Heart left ventricle (tissue), 16 donors: ENCODE measurements at regions of chr17 and their contacts with region 1.

Region 1: GRCh38 chr17:17526369-17526768 is 30.2 kb upstream of the RASD1 start:
- DNase-seq: peak; percentile 48 to 86 (median 66)
- ATAC-seq: peak; percentile 86 to 92 (median 90)
- H3K4me3 ChIP-seq: no peak overlapping the region
- H3K27ac ChIP-seq: peak overlapping the region in 11 of 12 donors; percentile 30 to 85 (median 73)
- H3K4me1 ChIP-seq: peaks cover 0 to 41% (median 14%) of the 10 kb centered on the region in 12 donors
- H3K27me3 ChIP-seq: no peaks in the 10 kb centered on the region
- CTCF ChIP-seq: no peak
- POLR2A ChIP-seq: no peak

Region 2: GRCh38 chr17:17476865-17477467 is 49.4 kb before region 1 on chr17 and contains the start of gene MED9:
- intact Hi-C with region 1: no loop called
- DNase-seq: peak; percentile 93 to 97 (median 95)
- ATAC-seq: peak; percentile 95 to 99 (median 99)
- H3K4me3 ChIP-seq: peak within 1 kb of the TSS; percentile 63 to 98 (median 84)
- H3K27ac ChIP-seq: peak within 1 kb of the TSS; percentile 90 to 98 (median 94)
- H3K4me1 ChIP-seq: peaks cover 0 to 52% (median 41%) of the 10 kb centered on the region in 12 donors
- H3K27me3 ChIP-seq: no peaks in the 10 kb centered on the region
- CTCF ChIP-seq: no peak
- POLR2A ChIP-seq: peak; percentile 29 to 77
- total RNA-seq, gene MED9: 26.3 to 64.4 (median 33.0) TPM

Region 3: GRCh38 chr17:17506811-17507464 is 19.4 kb before region 1 on chr17:
- intact Hi-C with region 1: loop called in 1 of 10 experiments (anchors 1 kb)
- DNase-seq: peak; percentile 58 to 93 (median 82)
- ATAC-seq: peak; percentile 36 to 88 (median 76)
- H3K4me3 ChIP-seq: no peak overlapping the region
- H3K27ac ChIP-seq: peak overlapping the region; percentile 32 to 88 (median 56)
- H3K4me1 ChIP-seq: peaks cover 0 to 28% (median 10%) of the 10 kb centered on the region in 12 donors
- H3K27me3 ChIP-seq: no peaks in the 10 kb centered on the region
- CTCF ChIP-seq: no peak
- POLR2A ChIP-seq: no peak

Region 4: DNA sequence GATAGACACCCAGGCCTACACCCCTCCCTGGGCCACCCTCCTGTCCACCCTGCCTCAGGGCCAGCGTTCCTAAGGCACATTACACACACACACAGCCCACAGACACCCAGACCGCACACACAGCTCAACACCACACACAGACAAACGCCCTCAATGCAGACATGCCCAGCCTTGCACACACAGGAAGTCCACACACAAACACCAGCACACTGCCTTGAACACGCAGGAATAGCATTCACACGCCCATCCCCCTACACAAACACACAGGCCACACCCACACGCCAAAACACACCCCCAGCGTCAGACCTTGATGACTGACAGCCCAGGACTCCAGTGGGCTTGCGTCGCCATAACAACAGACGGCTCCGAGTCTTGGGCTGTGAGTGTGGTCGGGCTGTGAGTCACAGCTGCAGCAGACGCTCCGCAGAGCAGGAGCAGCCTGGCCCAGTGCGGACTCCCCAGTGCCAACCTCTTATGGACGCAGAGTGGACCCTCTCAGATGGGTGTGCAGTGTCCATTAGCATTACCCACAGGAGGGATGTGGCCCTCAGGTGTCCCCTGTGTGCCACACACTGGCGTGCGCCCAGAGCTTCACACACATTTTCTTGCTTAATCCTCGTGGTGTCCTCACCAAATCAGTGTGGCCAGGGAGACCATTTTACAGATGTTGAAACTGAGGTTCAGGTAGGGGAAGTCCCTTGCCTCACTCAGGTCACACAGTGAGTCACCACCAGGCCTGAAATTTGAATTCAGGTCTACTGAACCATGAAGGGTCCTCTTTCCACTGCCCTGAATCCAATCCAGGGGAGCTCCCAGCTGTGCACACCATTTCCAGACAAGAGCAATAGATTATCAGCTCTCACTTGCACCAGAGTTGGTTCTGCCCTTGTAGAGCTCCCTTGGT is 137.0 kb after region 1 on chr17:
- intact Hi-C with region 1: no loop called
- DNase-seq: peak in 4 of 5 donors; percentile 34 to 77 (median 70)
- ATAC-seq: peak; percentile 5 to 79 (median 58)
- H3K4me3 ChIP-seq: no peak overlapping the region
- H3K27ac ChIP-seq: no peak overlapping the region
- H3K4me1 ChIP-seq: peaks cover 0 to 12% (median 0%) of the 10 kb centered on the region in 12 donors
- H3K27me3 ChIP-seq: no peaks in the 10 kb centered on the region
- CTCF ChIP-seq: no peak
- POLR2A ChIP-seq: no peak